ENCODE measurements at regions of chr2 and their contacts with region 1.

Region 1: GRCh38 chr2:71923887-71924533 is 223.7 kb downstream of the CYP26B1 start:
- DNase-seq: no peak

Region 2: DNA sequence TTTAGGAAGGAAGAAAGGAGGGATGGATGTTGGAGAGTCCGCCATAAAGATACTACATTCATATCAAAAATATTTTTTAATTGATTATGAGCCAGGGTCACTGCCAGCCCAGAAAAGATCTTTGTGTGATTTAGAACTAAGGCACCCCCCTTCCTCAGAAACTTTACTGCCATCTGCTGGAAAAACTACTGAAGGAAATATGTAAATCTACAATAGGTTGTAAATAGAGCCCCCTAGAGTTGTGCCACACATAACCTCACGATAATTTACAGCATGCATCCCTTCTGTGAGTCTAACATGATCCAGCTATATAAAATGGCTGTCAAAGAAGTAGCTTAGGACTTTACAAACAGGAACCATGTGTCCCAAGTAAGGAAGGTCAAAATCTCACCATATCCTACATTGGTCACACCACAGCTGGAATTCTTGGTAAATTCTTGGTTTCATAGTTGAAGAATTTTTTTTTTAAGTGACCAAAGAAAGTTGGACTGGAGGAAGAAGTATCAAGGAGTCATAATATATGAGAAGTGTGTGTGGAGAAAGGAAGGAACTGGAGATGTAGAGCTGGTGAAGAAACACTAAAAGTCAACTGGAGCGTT is 71.2 kb after region 1 on chr2:
- intact Hi-C with region 1: loop called (anchors 2 kb)
- DNase-seq: no peak

Region 3: GRCh38 chr2:72137498-72138010 is 213.5 kb after region 1 on chr2:
- intact Hi-C with region 1: loop called (anchors 5 kb)
- DNase-seq: peak; percentile 84

Region 4: GRCh38 chr2:72579591-72580180 is 655.7 kb after region 1 on chr2:
- intact Hi-C with region 1: loop called (anchors 5 kb)
- DNase-seq: no peak

Region 5: GRCh38 chr2:72745679-72746368 is 821.8 kb after region 1 on chr2:
- intact Hi-C with region 1: loop called (anchors 10 kb)
- DNase-seq: no peak